Psoas muscle (tissue), 8 donors: ENCODE measurements at regions of chr16 and their contacts with region 1.

Region 1: GRCh38 chr16:49556606-49557446 is 183.2 kb downstream of the C16orf78 start:
- DNase-seq: no peak
- ATAC-seq: peak in 3 of 4 donors; percentile 32 to 77 (median 59)
- H3K4me3 ChIP-seq: peak overlapping the region; percentile 35
- H3K27ac ChIP-seq: peak overlapping the region; percentile 49
- H3K4me1 ChIP-seq: peaks cover 40% of the 10 kb centered on the region
- H3K27me3 ChIP-seq: no peaks in the 10 kb centered on the region
- CTCF ChIP-seq: peak; percentile 56

Region 2: DNA sequence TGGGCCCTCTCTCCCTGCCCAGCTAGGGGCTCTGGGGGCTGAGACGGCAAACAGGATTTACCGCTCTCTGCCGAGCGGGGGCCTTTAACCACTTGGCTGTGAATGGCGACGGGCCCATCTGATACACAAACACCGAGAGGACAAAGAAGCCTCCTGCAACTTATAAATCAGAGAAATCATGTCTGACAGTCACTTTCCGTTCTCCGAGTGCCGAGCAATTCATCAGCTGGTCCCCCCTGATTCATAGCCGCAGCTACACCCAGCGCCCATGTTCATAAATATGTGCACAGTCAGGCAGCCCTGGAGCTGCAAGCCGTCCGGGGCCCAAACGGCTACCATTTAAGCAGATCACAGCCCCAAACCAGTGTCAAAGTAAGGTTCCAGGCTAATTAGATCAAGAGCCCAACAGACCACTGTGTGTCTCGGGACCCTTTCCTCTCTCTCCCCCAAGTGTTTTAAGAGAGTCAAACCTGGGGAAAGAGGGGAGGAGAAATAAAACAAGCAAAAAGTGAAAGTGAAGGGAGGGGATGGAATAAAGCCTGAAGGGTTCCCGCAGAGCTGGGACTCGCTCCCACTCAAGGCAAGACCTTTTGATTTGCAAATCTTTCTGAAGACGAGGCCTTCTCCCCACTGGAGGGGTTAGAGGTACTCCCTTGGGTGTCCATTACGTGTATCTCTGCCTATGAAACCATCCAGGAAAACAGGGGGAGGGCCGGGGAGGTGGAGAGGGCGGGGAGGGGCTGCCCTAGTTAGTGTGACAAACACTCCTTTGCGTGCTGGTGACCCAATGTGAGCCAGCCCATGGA is 28.6 kb before region 1 on chr16:
- intact Hi-C with region 1: no loop called
- DNase-seq: no peak
- ATAC-seq: peak in 2 of 4 donors; percentile 55 to 76
- H3K4me3 ChIP-seq: peak overlapping the region; percentile 52
- H3K27ac ChIP-seq: no peak overlapping the region
- H3K4me1 ChIP-seq: no peaks in the 10 kb centered on the region
- H3K27me3 ChIP-seq: no peaks in the 10 kb centered on the region
- CTCF ChIP-seq: no peak

Region 3: DNA sequence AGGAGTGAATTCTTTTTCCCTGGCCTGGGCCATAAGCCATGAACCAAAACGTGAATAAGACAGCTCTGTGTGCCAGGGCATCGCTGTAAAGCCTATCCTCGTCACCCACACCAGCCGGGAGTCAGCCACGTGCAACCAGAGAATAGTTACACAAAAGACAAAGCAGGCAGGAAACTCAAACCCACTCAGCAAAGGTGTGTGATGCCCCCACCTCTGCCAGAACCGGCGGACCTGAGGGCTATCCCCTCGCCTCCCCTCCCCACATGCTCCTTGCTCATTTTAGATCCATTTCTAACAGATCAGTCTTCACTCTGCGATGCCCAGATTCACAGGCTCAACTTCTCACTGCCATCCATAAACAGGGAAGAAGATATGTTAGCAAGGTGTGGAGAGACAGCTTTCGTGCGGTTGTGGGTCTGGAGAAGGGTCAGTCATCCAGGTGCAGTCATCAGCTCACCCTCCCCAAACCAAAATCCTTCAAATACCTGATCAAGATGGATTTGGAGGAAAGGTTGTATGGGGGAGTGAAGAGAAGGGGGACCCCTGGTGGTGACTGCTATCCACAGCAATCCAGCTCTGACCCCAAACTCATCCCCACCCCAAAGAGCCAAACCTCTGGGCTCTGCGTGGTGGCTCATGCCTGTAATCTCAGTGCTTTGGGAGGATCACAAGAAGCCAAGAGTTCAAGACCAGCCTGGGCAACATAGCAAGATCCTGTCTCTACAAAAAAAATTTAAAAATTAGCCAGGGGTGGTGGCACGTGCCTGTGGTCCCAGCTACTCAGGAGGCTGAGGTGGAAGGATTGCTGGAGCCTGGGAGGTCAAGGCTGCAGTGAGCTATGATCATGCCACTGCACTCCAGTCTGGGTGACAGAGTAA is 36.0 kb after region 1 on chr16:
- intact Hi-C with region 1: loop called in 1 of 2 experiments (anchors 5 kb)
- DNase-seq: peak in 1 of 2 donors; percentile 64
- ATAC-seq: peak in 3 of 4 donors; percentile 54 to 77 (median 62)
- H3K4me3 ChIP-seq: no peak overlapping the region
- H3K27ac ChIP-seq: no peak overlapping the region
- H3K4me1 ChIP-seq: peaks cover 25% of the 10 kb centered on the region
- H3K27me3 ChIP-seq: peaks cover 0 to 3% (median 0%) of the 10 kb centered on the region in 3 donors
- CTCF ChIP-seq: peak; percentile 69